IMR-90 (cell line): ENCODE measurements at regions of chr11 and their contacts with region 1.

Region 1: GRCh38 chr11:33344611-33345010 is 87.4 kb downstream of the HIPK3 start:
- DNase-seq: peak; percentile 18
- ATAC-seq: 0 out of 2 replicates have a peak, but pooled peaks have one; percentile 14
- H3K4me3 ChIP-seq: no peak overlapping the region
- H3K27ac ChIP-seq: no peak overlapping the region
- H3K4me1 ChIP-seq: no peaks in the 10 kb centered on the region
- H3K27me3 ChIP-seq: no peaks in the 10 kb centered on the region
- CTCF ChIP-seq: no peak
- POLR2A ChIP-seq: no peak
- RAD21 ChIP-seq: no peak

Region 2: DNA sequence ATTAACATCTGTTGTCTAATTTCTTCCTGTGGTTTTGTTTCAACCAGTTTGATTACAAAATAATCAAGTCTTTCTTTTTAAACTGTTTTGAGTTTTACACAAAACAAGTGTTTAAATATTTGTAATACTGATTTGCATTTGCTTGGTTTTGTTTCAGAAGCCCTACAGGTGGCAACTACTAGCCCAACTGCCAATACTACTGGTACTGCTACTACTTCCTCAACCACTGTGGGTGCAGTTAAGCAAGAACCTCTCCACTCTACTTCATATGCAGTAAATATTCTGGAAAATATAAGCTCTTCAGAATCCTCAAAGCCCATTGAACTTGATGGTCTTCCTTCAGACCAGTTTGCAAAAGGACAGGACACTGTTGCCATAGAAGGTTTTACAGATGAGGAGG is 390.9 kb before region 1 on chr11:
- CTCF ChIA-PET with region 1: no interaction called
- POLR2A ChIA-PET with region 1: no interaction called
- dilution Hi-C with region 1: no loop called
- in situ Hi-C with region 1: no loop called
- intact Hi-C with region 1: loop called (anchors 10 kb)
- DNase-seq: no peak
- ATAC-seq: no peak
- H3K4me3 ChIP-seq: no peak overlapping the region
- H3K27ac ChIP-seq: no peak overlapping the region
- H3K4me1 ChIP-seq: no peaks in the 10 kb centered on the region
- H3K27me3 ChIP-seq: no peaks in the 10 kb centered on the region
- CTCF ChIP-seq: no peak
- POLR2A ChIP-seq: no peak
- RAD21 ChIP-seq: no peak

Region 3: DNA sequence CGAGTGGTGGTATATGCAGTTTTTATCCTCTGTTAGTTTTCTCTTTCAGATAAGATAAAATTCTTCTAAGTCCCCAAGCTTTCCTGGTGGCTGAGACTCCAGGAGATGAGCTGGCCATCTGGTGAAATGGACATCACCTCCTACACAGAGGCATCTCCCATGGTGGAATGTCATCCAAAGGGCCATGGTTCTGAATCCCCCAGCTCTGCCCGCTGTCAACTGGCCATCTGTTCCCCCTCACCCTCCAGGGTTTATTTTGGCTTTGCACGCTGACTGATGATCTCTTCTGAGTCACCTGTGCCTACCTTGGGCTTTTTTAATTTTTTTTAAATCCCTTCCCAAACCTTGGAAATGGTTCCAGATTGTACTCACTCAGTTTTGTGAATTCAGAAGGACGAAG is 54.8 kb after region 1 on chr11:
- CTCF ChIA-PET with region 1: no interaction called
- POLR2A ChIA-PET with region 1: no interaction called
- dilution Hi-C with region 1: no loop called
- in situ Hi-C with region 1: no loop called
- intact Hi-C with region 1: loop called (anchors 2 kb)
- DNase-seq: no peak
- ATAC-seq: no peak
- H3K4me3 ChIP-seq: no peak overlapping the region
- H3K27ac ChIP-seq: no peak overlapping the region
- H3K4me1 ChIP-seq: no peaks in the 10 kb centered on the region
- H3K27me3 ChIP-seq: no peaks in the 10 kb centered on the region
- CTCF ChIP-seq: no peak
- POLR2A ChIP-seq: no peak
- RAD21 ChIP-seq: no peak

Region 4: DNA sequence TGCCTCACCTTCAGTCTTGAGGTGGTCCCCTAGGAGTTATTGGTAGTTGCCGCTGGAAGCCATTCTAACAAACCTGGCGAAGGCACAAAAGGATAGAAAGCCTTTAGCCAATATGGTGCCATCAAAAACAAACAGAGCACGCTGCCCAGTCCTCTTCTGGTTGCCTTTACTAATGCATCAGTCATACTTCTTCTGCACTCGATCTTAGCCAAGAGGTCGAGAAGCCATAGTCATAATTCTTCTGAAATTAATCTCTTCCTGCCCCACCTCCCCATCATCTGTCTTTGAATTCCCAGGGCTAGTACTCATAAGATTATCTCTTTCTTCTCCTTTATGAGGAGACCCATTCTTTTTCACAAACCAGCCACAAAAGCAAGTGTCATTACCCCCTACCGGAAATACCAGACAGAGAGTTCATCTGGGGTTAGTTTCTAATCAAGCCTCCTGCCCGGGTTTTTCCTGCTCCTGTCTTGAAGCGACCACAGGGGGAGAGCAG is 1254.8 kb after region 1 on chr11:
- CTCF ChIA-PET with region 1: no interaction called
- POLR2A ChIA-PET with region 1: no interaction called
- dilution Hi-C with region 1: no loop called
- in situ Hi-C with region 1: no loop called
- intact Hi-C with region 1: no loop called
- DNase-seq: peak; percentile 79
- ATAC-seq: peak; percentile 66
- H3K4me3 ChIP-seq: no peak overlapping the region
- H3K27ac ChIP-seq: peak overlapping the region; percentile 47; the same call in 1 of the 2 replicates
- H3K4me1 ChIP-seq: peaks cover 19% of the 10 kb centered on the region
- H3K27me3 ChIP-seq: no peaks in the 10 kb centered on the region
- CTCF ChIP-seq: no peak
- POLR2A ChIP-seq: no peak
- RAD21 ChIP-seq: no peak

Region 5: DNA sequence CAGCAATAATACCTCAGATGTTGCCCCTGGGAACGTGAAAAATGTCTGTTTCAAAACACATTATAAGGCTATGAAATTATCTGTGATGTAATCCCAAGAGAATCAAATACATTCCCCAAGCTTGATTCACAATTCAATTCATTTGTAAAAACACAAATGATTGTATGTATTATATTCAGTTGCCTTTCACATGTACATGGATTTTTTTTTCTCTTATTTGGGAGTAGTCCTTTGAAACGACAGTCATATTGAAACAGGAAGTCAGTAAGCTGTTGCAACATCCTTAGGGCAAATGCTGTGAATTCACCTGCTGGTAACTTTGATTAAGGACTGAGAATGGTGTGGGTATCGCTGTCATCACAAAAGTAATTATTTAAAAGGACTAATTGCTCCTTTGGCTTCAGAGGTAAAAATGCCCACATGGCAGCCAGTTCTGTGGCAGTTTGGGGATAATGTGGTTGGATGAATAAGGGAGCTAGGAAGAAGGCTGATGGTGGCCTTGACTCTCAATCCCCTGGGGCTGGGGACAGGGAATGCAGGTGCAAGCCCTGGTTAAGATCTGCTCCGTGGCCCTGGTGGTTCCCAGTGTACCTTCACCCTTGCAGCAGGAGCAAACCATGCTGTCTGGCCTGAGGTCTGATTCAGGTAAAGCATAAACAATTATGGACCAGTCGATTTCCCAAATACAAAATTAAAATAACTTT is 1289.5 kb after region 1 on chr11:
- CTCF ChIA-PET with region 1: no interaction called
- POLR2A ChIA-PET with region 1: no interaction called
- dilution Hi-C with region 1: no loop called
- in situ Hi-C with region 1: no loop called
- intact Hi-C with region 1: no loop called
- DNase-seq: peak; percentile 51
- ATAC-seq: no peak; the same call in 1 of the 2 replicates
- H3K4me3 ChIP-seq: no peak overlapping the region
- H3K27ac ChIP-seq: no peak overlapping the region
- H3K4me1 ChIP-seq: no peaks in the 10 kb centered on the region; the same call in 1 of the 2 replicates
- H3K27me3 ChIP-seq: no peaks in the 10 kb centered on the region
- CTCF ChIP-seq: no peak
- POLR2A ChIP-seq: no peak
- RAD21 ChIP-seq: no peak